Pancreas (tissue), 10 donors: ENCODE measurements at regions of chr11 and their contacts with region 1.

Region 1: DNA sequence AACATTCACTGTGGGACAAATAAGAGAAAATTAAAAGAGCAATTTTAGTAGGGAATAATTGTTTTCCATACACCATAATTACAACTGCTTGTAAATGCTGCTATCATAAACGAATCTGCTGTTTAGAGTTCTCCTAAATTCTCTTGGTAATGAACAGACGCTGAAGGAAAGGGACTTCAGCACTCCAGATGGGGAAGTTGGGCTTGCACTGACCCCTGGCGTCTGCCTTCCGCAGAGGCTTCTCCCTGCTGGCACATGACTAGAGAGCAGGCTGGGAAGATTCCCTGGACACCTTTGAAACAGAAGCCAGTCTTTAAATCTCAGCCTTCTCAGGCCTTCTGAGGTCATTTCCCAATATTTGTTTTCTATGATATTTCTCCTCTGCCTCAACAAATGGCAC is 84.1 kb downstream of the NXPE2 start:
- DNase-seq: peak in 5 of 6 donors; percentile 20 to 74 (median 57)
- ATAC-seq: peak in 3 of 4 donors; percentile 83 to 91 (median 91)
- H3K4me3 ChIP-seq: no peak overlapping the region
- H3K27ac ChIP-seq: no peak overlapping the region
- H3K4me1 ChIP-seq: no peaks in the 10 kb centered on the region
- H3K27me3 ChIP-seq: no peaks in the 10 kb centered on the region
- CTCF ChIP-seq: peak; percentile 15 to 50 (median 35)

Region 2: DNA sequence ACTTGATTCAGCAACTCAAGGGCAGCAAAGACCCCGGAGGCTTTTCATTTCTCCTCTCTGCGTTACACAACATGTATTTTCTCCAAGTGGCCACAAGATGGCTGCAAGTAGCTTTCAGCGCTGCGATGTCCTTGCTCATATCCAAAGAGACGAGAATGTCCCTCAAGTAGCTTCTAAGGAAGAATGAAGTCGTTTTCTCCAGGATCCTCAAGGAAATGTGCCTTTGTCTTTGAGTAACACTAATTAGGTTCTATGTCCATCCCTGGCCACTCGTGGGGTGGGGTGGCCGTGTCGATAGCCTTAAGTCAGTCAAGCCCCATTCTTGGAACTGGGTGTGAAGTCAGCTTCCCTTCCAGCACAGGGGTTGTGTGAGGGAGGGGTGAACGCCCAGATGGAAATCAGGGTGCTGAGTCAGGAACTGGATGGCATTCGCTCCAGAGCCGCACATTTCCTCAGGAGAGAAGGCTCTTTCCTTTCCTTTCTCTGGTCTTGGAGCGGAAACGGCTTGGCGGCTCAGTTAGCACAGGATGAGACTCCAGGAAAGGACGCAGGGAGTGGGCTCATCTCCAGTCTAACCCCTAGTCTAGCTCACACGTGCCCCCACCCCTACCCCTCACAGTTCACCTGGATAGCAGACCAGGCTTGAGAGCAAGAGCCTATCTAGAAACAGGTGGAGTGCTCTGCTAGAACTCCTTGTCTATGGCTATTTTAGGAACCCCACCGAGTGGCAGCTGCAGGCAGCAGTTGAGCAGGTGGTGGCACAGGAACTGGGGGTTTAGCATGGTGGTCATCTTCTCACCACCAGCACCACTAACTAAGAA is 421.9 kb before region 1 on chr11:
- intact Hi-C with region 1: loop called in 1 of 3 experiments (anchors 10 kb)
- DNase-seq: peak in 2 of 6 donors; percentile 36 to 54
- ATAC-seq: peak; percentile 78 to 94 (median 92)
- H3K4me3 ChIP-seq: peak overlapping the region in 1 of 4 donors; percentile 17
- H3K27ac ChIP-seq: no peak overlapping the region
- H3K4me1 ChIP-seq: peaks cover 0 to 3% (median 0%) of the 10 kb centered on the region in 3 donors
- H3K27me3 ChIP-seq: no peaks in the 10 kb centered on the region
- CTCF ChIP-seq: peak; percentile 29 to 68 (median 55)

Region 3: GRCh38 chr11:114501901-114502300 is 260.5 kb before region 1 on chr11:
- intact Hi-C with region 1: no loop called
- DNase-seq: no peak
- ATAC-seq: no peak
- H3K4me3 ChIP-seq: no peak overlapping the region
- H3K27ac ChIP-seq: no peak overlapping the region
- H3K4me1 ChIP-seq: no peaks in the 10 kb centered on the region
- H3K27me3 ChIP-seq: no peaks in the 10 kb centered on the region
- CTCF ChIP-seq: no peak

Region 4: GRCh38 chr11:114821621-114822412 is 59.4 kb after region 1 on chr11:
- intact Hi-C with region 1: no loop called
- DNase-seq: no peak
- ATAC-seq: peak in 1 of 4 donors; percentile 35
- H3K4me3 ChIP-seq: no peak overlapping the region
- H3K27ac ChIP-seq: no peak overlapping the region
- H3K4me1 ChIP-seq: no peaks in the 10 kb centered on the region
- H3K27me3 ChIP-seq: no peaks in the 10 kb centered on the region
- CTCF ChIP-seq: no peak